K562 (cell line): ENCODE measurements at regions of chr7 and their contacts with region 1.

Region 1: DNA sequence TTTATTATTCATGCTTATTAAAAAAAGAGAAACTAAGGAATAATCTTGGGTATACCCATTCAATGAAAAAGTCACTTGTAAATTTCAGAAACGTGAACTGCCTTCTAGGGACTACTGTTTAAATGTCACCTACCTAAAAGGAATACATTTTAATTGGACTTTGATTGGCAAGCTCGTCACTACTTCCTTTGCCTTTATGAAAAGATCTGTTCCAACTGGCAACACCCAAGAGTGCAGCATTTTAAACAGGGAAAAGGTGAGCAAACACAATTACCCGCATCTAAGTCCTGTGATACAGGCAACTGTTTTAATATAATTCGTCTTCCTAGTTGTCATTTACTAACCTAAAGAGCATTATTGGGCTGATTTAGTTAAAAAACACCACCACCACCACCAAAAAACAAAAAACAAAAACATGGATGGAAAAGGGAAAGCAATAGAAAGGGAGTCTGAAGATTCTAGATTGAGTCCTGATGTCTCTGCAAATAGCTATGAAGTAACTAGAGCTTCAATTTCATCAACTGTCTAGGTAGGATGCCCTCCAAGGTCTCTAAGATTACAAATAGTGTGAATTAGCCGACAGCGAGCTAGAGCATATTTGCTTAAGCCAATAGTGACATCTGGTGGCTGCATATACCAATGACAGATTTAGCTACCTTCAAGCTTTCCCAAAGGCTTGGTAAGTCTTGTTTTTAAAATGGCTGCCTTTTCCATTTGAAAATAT is 33.8 kb upstream of the ICA1 start:
- DNase-seq: peak; percentile 50 to 87 (median 62)
- ATAC-seq: peak; percentile 99
- H3K4me3 ChIP-seq: no peak overlapping the region
- H3K27ac ChIP-seq: no peak overlapping the region
- H3K4me1 ChIP-seq: peaks cover 0 to 3% of the 10 kb centered on the region in 2 experiments; a peak in 1 of 5 replicates
- H3K27me3 ChIP-seq: no peaks in the 10 kb centered on the region
- CTCF ChIP-seq: peak; percentile 70 to 89 (median 80)
- EP300 ChIP-seq: no peak
- POLR2A ChIP-seq: no peak
- RAD21 ChIP-seq: peak; percentile 97 to 98

Region 2: GRCh38 chr7:7103343-7104313 is 1192.2 kb before region 1 on chr7:
- CTCF ChIA-PET with region 1: no interaction called
- POLR2A ChIA-PET with region 1: interaction called, 4 read pairs
- in situ Hi-C with region 1: loop called (anchors 10 kb)
- intact Hi-C with region 1: loop called (anchors 2 kb)
- DNase-seq: peak; percentile 42 to 82 (median 49)
- ATAC-seq: peak; percentile 47
- H3K4me3 ChIP-seq: peak overlapping the region; percentile 32
- H3K27ac ChIP-seq: peak overlapping the region; percentile 72
- H3K4me1 ChIP-seq: peaks cover 22 to 43% of the 10 kb centered on the region in 2 experiments; a peak in 4 of 5 replicates
- H3K27me3 ChIP-seq: no peaks in the 10 kb centered on the region
- CTCF ChIP-seq: peak; percentile 41 to 76 (median 63); a peak in 5 of 6 replicates
- EP300 ChIP-seq: no peak
- POLR2A ChIP-seq: no peak
- RAD21 ChIP-seq: peak; percentile 78 to 87

Region 3: GRCh38 chr7:7521259-7521658 is 774.5 kb before region 1 on chr7:
- CTCF ChIA-PET with region 1: no interaction called
- POLR2A ChIA-PET with region 1: no interaction called
- in situ Hi-C with region 1: no loop called
- intact Hi-C with region 1: loop called (anchors 10 kb)
- DNase-seq: peak in 2 of 4 experiments; percentile 6 to 33
- ATAC-seq: peak; percentile 75; the same call in 2 of the 3 replicates
- H3K4me3 ChIP-seq: no peak overlapping the region
- H3K27ac ChIP-seq: no peak overlapping the region
- H3K4me1 ChIP-seq: no peaks in the 10 kb centered on the region
- H3K27me3 ChIP-seq: no peaks in the 10 kb centered on the region
- CTCF ChIP-seq: peak in 2 of 3 experiments; percentile 32 to 36; a peak in 2 of 6 replicates
- EP300 ChIP-seq: no peak
- POLR2A ChIP-seq: no peak
- RAD21 ChIP-seq: peak; percentile 30 to 57; a peak in 3 of 4 replicates

Region 4: GRCh38 chr7:7640221-7641128 is 655.3 kb before region 1 on chr7 and contains the start of gene UMAD1:
- CTCF ChIA-PET with region 1: no interaction called
- POLR2A ChIA-PET with region 1: no interaction called
- in situ Hi-C with region 1: no loop called
- intact Hi-C with region 1: loop called (anchors 2 kb)
- DNase-seq: peak; percentile 90 to 100 (median 92)
- ATAC-seq: peak; percentile 95
- H3K4me3 ChIP-seq: peak within 1 kb of the TSS; percentile 62
- H3K27ac ChIP-seq: peak within 1 kb of the TSS; percentile 87
- H3K4me1 ChIP-seq: peaks cover 0 to 3% of the 10 kb centered on the region in 2 experiments; a peak in 1 of 5 replicates
- H3K27me3 ChIP-seq: no peaks in the 10 kb centered on the region
- CTCF ChIP-seq: 0 out of 6 replicates have a peak, but pooled peaks of 1 of the 3 experiments have one; percentile 5
- EP300 ChIP-seq: peak; percentile 3; the same call in 1 of the 2 replicates
- POLR2A ChIP-seq: peak; percentile 91
- RAD21 ChIP-seq: 0 out of 4 replicates have a peak, but pooled peaks of 1 of the 2 experiments have one; percentile 16
- polyA plus RNA-seq, gene UMAD1: 11.6 to 13.9 TPM

Region 5: DNA sequence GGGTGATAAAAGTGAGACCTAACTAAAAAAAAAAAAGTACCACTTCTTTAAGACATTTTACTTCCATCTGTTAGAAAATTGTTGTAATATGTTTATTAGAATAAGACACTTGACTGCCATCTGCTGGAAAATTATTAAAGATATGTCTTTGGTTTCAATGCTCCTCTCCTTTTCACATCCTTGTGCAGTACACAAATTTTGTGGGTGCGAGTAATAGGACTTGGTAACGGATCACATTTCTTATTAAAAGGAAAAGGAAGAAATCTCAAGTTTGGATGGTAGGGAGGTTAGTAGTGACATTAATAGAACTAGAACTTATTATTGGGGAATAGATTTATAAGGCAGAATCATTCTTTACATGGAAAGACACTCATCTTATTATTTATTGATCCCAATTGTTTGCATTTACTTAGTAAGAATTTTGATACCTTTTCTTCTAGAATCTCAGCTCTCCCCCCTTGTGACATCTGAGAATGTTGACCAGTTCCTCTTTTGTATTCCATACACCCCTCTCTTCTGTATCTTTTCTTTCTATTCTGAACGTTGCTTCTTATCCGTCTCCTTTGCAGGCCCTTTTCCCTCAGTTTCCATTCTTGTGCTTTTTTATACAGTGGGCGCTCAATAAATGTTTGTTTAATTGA is 534.3 kb before region 1 on chr7:
- CTCF ChIA-PET with region 1: no interaction called
- POLR2A ChIA-PET with region 1: no interaction called
- in situ Hi-C with region 1: no loop called
- intact Hi-C with region 1: loop called (anchors 10 kb)
- DNase-seq: peak in 3 of 4 experiments; percentile 8 to 31 (median 10)
- ATAC-seq: peak; percentile 69; the same call in 2 of the 3 replicates
- H3K4me3 ChIP-seq: no peak overlapping the region
- H3K27ac ChIP-seq: no peak overlapping the region
- H3K4me1 ChIP-seq: no peaks in the 10 kb centered on the region; a peak in 1 of 5 replicates
- H3K27me3 ChIP-seq: no peaks in the 10 kb centered on the region
- CTCF ChIP-seq: peak in 1 of 3 experiments; percentile 42; a peak in 3 of 6 replicates
- EP300 ChIP-seq: no peak
- POLR2A ChIP-seq: no peak
- RAD21 ChIP-seq: peak; percentile 18 to 40; a peak in 2 of 4 replicates

Region 6: GRCh38 chr7:7816084-7816483 is 479.7 kb before region 1 on chr7:
- CTCF ChIA-PET with region 1: no interaction called
- POLR2A ChIA-PET with region 1: no interaction called
- in situ Hi-C with region 1: no loop called
- intact Hi-C with region 1: no loop called
- DNase-seq: no peak
- ATAC-seq: no peak
- H3K4me3 ChIP-seq: no peak overlapping the region
- H3K27ac ChIP-seq: no peak overlapping the region
- H3K4me1 ChIP-seq: no peaks in the 10 kb centered on the region
- H3K27me3 ChIP-seq: no peaks in the 10 kb centered on the region
- CTCF ChIP-seq: no peak
- EP300 ChIP-seq: no peak
- POLR2A ChIP-seq: no peak
- RAD21 ChIP-seq: no peak

Region 7: DNA sequence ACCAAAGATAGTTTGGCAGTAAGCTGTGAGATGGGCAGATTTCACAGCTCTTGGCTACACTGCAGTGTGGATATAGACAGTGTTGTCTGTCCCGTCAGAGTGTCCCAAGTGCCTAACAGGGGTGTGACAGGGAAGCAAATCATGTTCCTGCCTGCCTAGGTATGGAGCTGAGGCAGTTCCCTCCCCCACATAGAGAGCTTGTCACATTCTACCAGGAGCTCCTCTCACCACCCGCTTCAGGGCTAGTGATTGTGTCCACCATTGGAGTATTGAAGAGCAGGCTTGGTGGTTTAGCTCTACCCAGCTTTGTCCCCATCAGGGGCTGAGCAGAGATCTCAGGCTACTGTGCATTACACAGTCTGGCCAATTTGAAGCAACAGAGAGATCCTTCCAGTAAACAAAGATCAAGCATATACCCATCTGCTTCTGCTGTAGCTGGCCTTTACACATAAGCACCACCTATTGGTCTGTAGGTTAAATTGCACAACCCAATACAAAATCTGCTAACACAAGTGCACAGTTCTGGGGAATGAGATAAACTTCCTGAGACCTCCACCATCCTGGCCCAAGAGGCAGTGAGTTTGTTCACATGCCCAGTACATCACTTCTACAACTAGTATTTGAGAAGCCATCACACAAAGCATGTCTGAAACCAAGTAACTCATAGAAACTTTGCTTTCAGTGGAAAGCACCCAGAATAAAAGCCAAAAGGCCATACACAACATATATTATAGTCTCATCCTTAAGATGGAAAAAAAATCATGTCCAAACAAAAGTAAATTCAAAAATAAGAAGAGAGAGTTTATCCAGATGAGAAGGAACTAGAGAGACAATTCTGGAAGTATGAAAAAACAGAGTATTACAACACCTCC is 259.9 kb before region 1 on chr7:
- CTCF ChIA-PET with region 1: no interaction called
- POLR2A ChIA-PET with region 1: no interaction called
- in situ Hi-C with region 1: no loop called
- intact Hi-C with region 1: loop called (anchors 10 kb)
- DNase-seq: peak in 1 of 4 experiments; percentile 24
- ATAC-seq: peak; percentile 90
- H3K4me3 ChIP-seq: no peak overlapping the region
- H3K27ac ChIP-seq: no peak overlapping the region
- H3K4me1 ChIP-seq: no peaks in the 10 kb centered on the region
- H3K27me3 ChIP-seq: no peaks in the 10 kb centered on the region
- CTCF ChIP-seq: peak in 2 of 3 experiments; percentile 41 to 42; a peak in 4 of 6 replicates
- EP300 ChIP-seq: no peak
- POLR2A ChIP-seq: no peak
- RAD21 ChIP-seq: peak in 1 of 2 experiments; percentile 67; a peak in 2 of 4 replicates

Region 8: DNA sequence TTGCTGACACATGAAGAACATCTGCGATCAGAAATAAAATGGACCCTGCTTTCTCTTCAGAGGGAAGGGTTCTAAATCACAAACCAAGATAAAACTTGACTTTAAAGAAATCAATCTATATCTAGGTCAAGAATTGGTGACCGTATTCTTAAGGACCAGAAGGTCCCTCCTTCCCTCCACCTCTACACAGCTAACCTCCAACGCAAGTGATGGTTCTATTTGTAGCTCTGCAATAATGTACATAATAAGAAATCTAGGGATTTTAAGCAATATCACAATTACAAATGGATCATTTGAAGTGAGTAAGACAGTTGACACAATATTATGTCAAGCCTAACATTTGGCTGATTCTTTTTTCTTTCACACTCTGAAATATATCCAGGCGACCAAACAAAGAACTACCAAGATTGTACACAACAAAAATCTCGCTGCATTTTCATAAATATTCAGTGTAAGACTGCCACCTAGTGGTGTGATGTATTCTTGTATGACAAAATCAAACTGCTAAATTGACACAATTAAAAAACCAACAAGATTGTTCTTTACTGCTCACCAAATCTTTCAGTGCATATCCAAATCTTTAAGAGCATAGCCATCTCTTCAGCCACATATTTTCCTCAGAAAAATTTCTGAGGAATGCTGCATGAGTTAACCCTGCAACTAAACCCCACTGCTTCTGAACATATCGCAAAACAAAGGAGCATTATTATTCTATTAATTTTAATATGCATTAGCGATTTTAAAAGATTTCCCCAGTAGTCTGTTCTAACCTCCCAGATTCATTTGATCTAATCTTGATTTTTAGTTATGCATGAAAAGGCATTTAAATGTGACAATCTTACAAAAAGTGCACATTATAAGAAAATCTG is 78.4 kb before region 1 on chr7:
- CTCF ChIA-PET with region 1: no interaction called
- POLR2A ChIA-PET with region 1: no interaction called
- in situ Hi-C with region 1: no loop called
- intact Hi-C with region 1: loop called (anchors 5 kb)
- DNase-seq: peak; percentile 38 to 74 (median 39)
- ATAC-seq: peak; percentile 70
- H3K4me3 ChIP-seq: no peak overlapping the region
- H3K27ac ChIP-seq: no peak overlapping the region
- H3K4me1 ChIP-seq: no peaks in the 10 kb centered on the region
- H3K27me3 ChIP-seq: no peaks in the 10 kb centered on the region
- CTCF ChIP-seq: peak; percentile 35 to 74 (median 53); a peak in 4 of 6 replicates
- EP300 ChIP-seq: no peak
- POLR2A ChIP-seq: no peak
- RAD21 ChIP-seq: peak; percentile 85 to 86